K562 (cell line): ENCODE measurements at regions of chr2 and their contacts with region 1.

Region 1: DNA sequence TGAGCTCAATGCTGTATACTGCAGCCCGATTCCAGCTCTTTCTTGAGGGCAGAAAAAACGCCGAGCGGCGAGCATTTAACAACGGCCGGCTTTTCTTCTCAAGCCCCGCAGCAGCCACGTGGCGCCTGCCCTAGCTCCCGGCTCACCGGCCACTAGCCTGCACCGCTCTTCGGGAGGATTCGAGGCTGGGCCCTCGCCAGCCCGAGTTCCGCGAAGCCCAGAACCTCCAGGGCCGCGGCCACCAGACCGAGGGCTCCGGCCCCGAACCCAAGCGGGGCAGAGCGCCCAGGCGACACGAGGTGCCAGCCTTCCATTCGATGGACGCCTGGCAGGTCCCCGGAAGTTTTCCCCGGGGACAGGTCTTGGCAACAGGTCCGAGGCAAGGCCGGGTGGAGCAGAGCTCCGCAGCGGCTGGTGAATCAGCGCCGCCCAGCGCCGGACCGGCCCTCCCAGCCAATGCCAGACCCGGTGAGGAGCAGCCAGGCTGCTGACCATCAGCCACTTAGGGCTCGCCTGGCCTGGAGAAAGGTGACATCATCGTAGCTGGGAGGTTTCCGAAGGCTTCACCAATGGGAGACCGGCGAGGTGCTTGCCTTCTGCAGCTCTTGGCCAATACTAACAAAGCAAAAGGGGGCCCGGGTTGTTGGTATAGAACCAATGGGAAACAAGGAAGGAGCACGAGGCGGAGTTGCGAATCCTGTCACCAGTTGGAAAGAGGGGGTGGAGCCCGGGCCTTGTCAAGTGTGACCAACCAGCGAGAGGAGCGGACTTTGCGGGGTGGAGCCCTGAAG is 544 bp upstream of the MXD1 start:
- DNase-seq: peak; percentile 95 to 100 (median 97)
- ATAC-seq: peak; percentile 89
- H3K4me3 ChIP-seq: peak overlapping the region; percentile 96
- H3K27ac ChIP-seq: peak overlapping the region; percentile 96
- H3K4me1 ChIP-seq: peaks cover 15 to 21% of the 10 kb centered on the region in 2 experiments
- H3K27me3 ChIP-seq: no peaks in the 10 kb centered on the region
- CTCF ChIP-seq: peak; percentile 61 to 65 (median 62)
- EP300 ChIP-seq: peak; percentile 23
- POLR2A ChIP-seq: peak; percentile 87
- RAD21 ChIP-seq: peak; percentile 46 to 71

Region 2: DNA sequence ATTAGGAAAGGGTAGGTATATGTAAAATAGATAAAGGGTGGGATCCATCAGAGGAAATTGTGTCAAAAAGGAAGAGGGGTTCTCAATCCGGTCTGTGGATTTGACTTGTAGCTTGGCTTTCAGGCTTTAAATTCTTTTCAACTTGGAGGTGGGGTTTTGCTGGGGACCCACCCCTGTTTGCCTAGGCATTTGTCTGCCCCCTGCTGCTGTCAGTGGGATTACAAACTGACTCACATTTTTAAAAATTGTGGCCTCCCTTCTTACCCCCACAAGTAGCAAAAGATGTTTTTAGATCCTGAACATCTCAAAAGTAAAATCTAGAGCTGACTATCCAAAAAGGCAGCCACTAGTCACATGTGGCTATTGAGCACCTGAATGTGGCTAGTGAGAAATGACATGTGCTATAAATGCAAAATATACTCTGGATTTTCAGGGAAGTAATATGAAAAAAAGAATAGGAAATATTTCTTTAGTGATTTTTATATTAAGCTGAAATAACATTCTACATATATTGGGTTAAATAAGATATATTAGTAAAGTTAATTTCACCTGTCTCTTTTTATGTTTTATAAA is 706.3 kb before region 1 on chr2:
- CTCF ChIA-PET with region 1: no interaction called
- POLR2A ChIA-PET with region 1: no interaction called
- in situ Hi-C with region 1: no loop called
- intact Hi-C with region 1: no loop called
- DNase-seq: peak in 2 of 4 experiments; percentile 7 to 13
- ATAC-seq: peak; percentile 57; the same call in 1 of the 3 replicates
- H3K4me3 ChIP-seq: no peak overlapping the region
- H3K27ac ChIP-seq: no peak overlapping the region
- H3K4me1 ChIP-seq: no peaks in the 10 kb centered on the region
- H3K27me3 ChIP-seq: peaks cover 0 to 12% of the 10 kb centered on the region in 2 experiments; a peak in 4 of 5 replicates
- CTCF ChIP-seq: peak; percentile 28 to 31 (median 30); a peak in 3 of 6 replicates
- EP300 ChIP-seq: no peak
- POLR2A ChIP-seq: no peak
- RAD21 ChIP-seq: peak; percentile 38 to 50

Region 3: GRCh38 chr2:69559442-69560146 is 354.8 kb before region 1 on chr2:
- CTCF ChIA-PET with region 1: interaction called, 5 read pairs
- POLR2A ChIA-PET with region 1: no interaction called
- in situ Hi-C with region 1: no loop called
- intact Hi-C with region 1: loop called (anchors 5 kb)
- DNase-seq: peak; percentile 53 to 75 (median 61)
- ATAC-seq: peak; percentile 94
- H3K4me3 ChIP-seq: no peak overlapping the region
- H3K27ac ChIP-seq: no peak overlapping the region
- H3K4me1 ChIP-seq: peaks cover 0 to 4% of the 10 kb centered on the region in 2 experiments; a peak in 1 of 5 replicates
- H3K27me3 ChIP-seq: no peaks in the 10 kb centered on the region
- CTCF ChIP-seq: peak; percentile 78 to 91 (median 84)
- EP300 ChIP-seq: no peak
- POLR2A ChIP-seq: no peak
- RAD21 ChIP-seq: peak; percentile 93 to 97

Region 4: GRCh38 chr2:69893684-69894551 is 20.4 kb before region 1 on chr2 and contains the start of gene SNRNP27:
- CTCF ChIA-PET with region 1: no interaction called
- POLR2A ChIA-PET with region 1: interaction called, 17 read pairs
- in situ Hi-C with region 1: no loop called
- intact Hi-C with region 1: no loop called
- DNase-seq: peak; percentile 67 to 91 (median 77)
- ATAC-seq: peak; percentile 96
- H3K4me3 ChIP-seq: peak within 1 kb of the TSS; percentile 68
- H3K27ac ChIP-seq: peak within 1 kb of the TSS; percentile 79
- H3K4me1 ChIP-seq: peaks cover 3 to 7% of the 10 kb centered on the region in 2 experiments; a peak in 4 of 5 replicates
- H3K27me3 ChIP-seq: no peaks in the 10 kb centered on the region
- CTCF ChIP-seq: no peak
- EP300 ChIP-seq: no peak
- POLR2A ChIP-seq: peak; percentile 90
- RAD21 ChIP-seq: peak in 1 of 2 experiments; percentile 12; a peak in 1 of 4 replicates
- polyA plus RNA-seq, gene SNRNP27: 29.2 to 33.7 TPM

Region 5: DNA sequence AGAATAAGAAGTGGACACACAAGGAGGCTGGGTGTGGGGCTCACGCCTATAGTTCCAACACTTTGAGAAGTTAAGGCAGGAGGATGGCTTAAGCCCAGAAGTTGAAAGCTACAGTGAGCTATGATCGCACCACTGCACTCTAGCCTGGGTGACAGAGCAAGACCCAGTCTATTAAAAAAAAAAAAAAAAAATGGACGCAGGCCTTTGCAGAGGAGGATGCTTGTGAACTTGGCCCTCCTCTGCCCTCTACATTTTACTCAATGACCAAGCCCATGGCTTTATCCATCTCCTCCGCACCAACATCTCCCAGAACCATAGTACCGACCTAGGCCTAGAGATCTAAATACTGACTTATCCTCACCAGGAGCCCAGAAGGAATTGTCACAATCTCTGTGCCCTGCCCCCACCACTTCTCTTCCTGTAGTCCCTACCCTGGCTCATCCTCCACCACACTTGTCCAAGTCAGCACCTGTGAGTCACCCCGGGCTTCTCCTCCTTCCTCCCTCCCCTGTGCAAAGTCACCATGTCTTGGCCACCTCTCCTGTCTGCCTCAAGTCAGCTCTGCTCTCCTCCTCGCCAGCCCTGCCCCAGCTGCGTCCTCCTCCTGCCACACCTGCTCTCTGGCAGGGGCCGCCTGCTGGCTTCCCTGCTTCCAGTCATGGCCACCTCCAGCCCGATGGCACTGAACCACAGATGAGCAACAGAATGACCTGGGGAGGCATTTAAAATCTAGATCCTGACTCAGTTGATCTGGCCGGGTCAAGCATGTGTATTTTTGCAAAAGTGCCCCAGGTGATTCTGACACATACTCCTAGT is 82.9 kb after region 1 on chr2:
- CTCF ChIA-PET with region 1: no interaction called
- POLR2A ChIA-PET with region 1: no interaction called
- in situ Hi-C with region 1: no loop called
- intact Hi-C with region 1: loop called (anchors 2 kb)
- DNase-seq: peak; percentile 68 to 89 (median 78)
- ATAC-seq: peak; percentile 93
- H3K4me3 ChIP-seq: no peak overlapping the region
- H3K27ac ChIP-seq: peak overlapping the region; percentile 72; the same call in 2 of the 3 replicates
- H3K4me1 ChIP-seq: peaks cover 25 to 33% of the 10 kb centered on the region in 2 experiments; a peak in 4 of 5 replicates
- H3K27me3 ChIP-seq: no peaks in the 10 kb centered on the region
- CTCF ChIP-seq: no peak
- EP300 ChIP-seq: peak; percentile 62; the same call in 1 of the 2 replicates
- POLR2A ChIP-seq: no peak; the same call in 1 of the 2 replicates
- RAD21 ChIP-seq: no peak

Region 6: GRCh38 chr2:70086838-70087701 is 172.7 kb after region 1 on chr2 and contains the start of gene PCBP1:
- CTCF ChIA-PET with region 1: interaction called, 3 read pairs
- POLR2A ChIA-PET with region 1: interaction called, 80 read pairs
- in situ Hi-C with region 1: no loop called
- intact Hi-C with region 1: loop called (anchors 2 kb)
- DNase-seq: peak; percentile 94 to 97 (median 96)
- ATAC-seq: peak; percentile 34
- H3K4me3 ChIP-seq: peak within 1 kb of the TSS; percentile 90
- H3K27ac ChIP-seq: peak within 1 kb of the TSS; percentile 100
- H3K4me1 ChIP-seq: peaks cover 13 to 43% of the 10 kb centered on the region in 2 experiments
- H3K27me3 ChIP-seq: no peaks in the 10 kb centered on the region
- CTCF ChIP-seq: peak in 1 of 3 experiments; percentile 8; a peak in 1 of 6 replicates
- EP300 ChIP-seq: no peak; the same call in 1 of the 2 replicates
- POLR2A ChIP-seq: peak; percentile 80
- RAD21 ChIP-seq: peak in 1 of 2 experiments; percentile 9; a peak in 2 of 4 replicates
- polyA plus RNA-seq, gene PCBP1: 19.2 to 23.9 TPM

Region 7: GRCh38 chr2:70142590-70143313 is 228.4 kb after region 1 on chr2:
- CTCF ChIA-PET with region 1: interaction called, 30 read pairs
- POLR2A ChIA-PET with region 1: interaction called, 31 read pairs
- in situ Hi-C with region 1: no loop called
- intact Hi-C with region 1: loop called (anchors 1 kb)
- DNase-seq: peak; percentile 97 to 100 (median 98)
- ATAC-seq: peak; percentile 77
- H3K4me3 ChIP-seq: peak overlapping the region; percentile 28
- H3K27ac ChIP-seq: peak overlapping the region; percentile 97
- H3K4me1 ChIP-seq: peaks cover 54 to 59% of the 10 kb centered on the region in 2 experiments
- H3K27me3 ChIP-seq: no peaks in the 10 kb centered on the region
- CTCF ChIP-seq: peak; percentile 93 to 98 (median 95)
- EP300 ChIP-seq: peak; percentile 60
- POLR2A ChIP-seq: peak; percentile 85
- RAD21 ChIP-seq: peak; percentile 99 to 100

Region 8: DNA sequence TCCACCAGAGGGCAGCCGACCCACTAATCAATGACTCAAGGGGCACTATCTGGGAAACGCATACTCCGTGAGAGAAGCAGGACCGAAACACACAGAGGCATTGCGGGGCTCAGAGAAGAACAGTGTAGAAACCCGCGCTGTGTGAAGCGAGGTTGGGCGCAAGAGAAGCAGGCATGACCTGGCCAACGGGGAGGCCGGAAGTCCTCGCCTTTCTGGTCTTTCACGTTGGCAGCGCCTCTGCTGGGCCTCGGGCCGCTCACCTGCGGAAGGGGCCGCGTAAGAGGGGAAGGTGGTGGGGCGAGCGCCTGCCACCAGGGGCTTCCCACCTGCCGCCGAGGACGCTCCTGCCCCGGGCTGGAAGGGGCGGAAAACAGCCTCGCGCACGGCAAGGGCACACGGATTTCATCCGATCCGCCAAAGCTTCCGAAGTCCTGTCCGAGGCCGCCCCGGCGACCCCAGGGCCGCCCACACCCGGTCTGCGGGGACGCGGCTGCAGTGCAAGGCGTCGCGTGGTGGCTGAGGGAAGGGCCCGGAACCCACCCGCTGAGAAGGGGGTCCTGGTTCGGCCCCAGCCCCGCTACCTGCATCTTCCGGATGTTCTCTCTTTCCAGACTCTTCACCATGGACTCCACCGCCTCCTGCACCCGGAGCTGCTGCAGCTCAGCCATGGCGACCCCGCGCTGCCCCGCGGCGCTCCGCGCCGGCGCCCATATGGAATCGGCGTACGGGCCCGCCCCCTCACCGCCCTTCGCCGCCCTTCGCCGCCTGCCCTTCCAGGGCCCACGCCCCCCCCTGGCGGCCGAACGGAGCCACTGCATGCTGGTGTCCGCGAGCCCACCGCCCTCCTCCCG is 387.2 kb after region 1 on chr2 and contains the start of gene FAM136A:
- CTCF ChIA-PET with region 1: interaction called, 10 read pairs
- POLR2A ChIA-PET with region 1: interaction called, 4 read pairs
- in situ Hi-C with region 1: loop called (anchors 10 kb)
- intact Hi-C with region 1: loop called (anchors 2 kb)
- DNase-seq: peak; percentile 91 to 96 (median 93)
- ATAC-seq: peak; percentile 96
- H3K4me3 ChIP-seq: peak within 1 kb of the TSS; percentile 55
- H3K27ac ChIP-seq: peak within 1 kb of the TSS; percentile 87
- H3K4me1 ChIP-seq: peaks cover 6 to 14% of the 10 kb centered on the region in 2 experiments; a peak in 4 of 5 replicates
- H3K27me3 ChIP-seq: peaks cover 0 to 5% of the 10 kb centered on the region in 2 experiments; a peak in 2 of 5 replicates
- CTCF ChIP-seq: peak; percentile 81 to 94 (median 89)
- EP300 ChIP-seq: no peak
- POLR2A ChIP-seq: peak; percentile 88
- RAD21 ChIP-seq: peak; percentile 62 to 77; a peak in 3 of 4 replicates
- polyA plus RNA-seq, gene FAM136A: 125 to 151 TPM